MCF 10A (cell line): ENCODE measurements at regions of chr14 and their contacts with region 1.

Region 1: DNA sequence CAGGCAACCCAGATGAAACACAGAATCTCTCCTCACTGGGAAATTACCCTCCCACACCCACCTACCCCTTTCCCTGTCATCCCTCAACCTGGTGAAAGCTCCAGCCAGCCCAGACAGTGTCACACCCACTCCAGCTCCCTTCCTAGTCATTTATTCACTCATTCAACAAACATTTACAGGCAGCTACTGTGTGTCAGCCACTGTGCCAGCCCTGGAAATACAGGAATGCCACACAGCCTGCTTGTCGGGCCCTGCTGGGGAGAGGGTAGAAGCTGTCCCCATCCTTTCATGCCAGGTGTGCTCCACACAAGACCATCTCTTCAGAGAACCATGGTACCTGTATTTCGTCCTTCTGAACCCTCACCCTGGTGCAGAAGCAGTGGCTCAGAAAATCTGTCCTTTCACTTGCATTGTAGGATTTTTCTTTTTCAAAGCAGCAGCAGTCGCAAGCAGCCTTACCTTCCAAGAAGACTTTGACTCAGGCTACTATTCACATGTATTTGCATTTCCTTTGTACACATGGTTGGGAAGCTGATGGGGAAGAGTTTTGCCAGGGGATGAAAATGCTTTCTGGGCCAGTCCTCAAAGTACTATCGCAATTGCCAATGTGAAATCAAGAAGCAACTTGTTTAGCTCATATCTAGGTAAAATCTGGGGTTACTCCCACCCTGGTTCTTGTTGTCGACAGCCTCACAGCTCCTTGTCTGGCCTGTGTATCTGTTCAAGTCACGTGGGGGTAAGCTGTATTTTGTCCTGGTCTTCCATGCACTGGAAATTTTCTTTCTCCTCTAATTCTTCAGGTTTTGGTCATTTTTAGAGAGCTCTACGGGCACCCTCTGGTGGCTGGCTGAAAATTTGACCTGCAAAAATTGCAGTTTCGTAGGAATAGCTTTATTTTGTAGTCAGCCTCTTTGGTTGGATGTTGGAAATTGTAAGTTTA is 147.4 kb upstream of the EGLN3 start:
- DNase-seq: peak; percentile 50
- H3K4me3 Mint-ChIP-seq: no peak overlapping the region
- H3K27ac Mint-ChIP-seq: no peak overlapping the region
- H3K4me1 Mint-ChIP-seq: peaks cover 10% of the 10 kb centered on the region
- H3K27me3 Mint-ChIP-seq: no peaks in the 10 kb centered on the region
- CTCF ChIP-seq: peak; percentile 77

Region 2: DNA sequence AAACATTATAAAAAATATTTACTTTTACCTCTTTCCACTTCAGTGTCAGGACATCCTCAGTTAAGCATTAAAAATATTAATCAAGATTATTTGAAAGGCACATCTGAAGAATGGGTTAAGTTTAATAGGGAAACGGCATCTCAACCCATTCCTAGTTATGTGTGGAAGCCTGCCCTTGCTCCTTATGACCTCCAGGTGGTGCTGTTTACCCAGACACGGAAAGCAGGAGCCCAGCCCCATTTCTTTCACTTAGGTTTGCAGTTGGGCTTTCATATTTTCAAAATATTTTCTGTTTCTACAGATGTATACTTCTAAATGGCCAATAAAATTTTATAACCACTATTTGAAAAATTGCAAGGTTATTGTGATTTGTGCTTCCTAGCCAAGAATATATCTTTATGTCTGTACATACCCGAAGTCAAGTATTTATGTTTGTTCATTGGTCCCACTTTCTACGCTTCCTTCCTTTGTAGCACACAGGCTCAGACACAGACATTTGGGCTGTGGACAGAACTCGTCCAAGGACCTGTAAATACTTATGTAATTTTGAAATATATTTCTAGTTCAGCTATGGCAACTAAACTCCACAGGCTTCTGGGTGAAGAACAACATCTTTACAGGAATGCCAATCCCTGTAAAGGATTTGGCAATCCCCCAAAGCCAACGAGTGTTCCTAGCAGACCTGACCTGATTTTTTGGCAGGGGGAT is 1522.1 kb before region 1 on chr14:
- CTCF ChIA-PET with region 1: no interaction called
- POLR2A ChIA-PET with region 1: no interaction called
- intact Hi-C with region 1: loop called (anchors 1 kb)
- DNase-seq: peak; percentile 73
- H3K4me3 Mint-ChIP-seq: no peak overlapping the region
- H3K27ac Mint-ChIP-seq: no peak overlapping the region
- H3K4me1 Mint-ChIP-seq: no peaks in the 10 kb centered on the region
- H3K27me3 Mint-ChIP-seq: peaks cover 13% of the 10 kb centered on the region
- CTCF ChIP-seq: peak; percentile 97

Region 3: DNA sequence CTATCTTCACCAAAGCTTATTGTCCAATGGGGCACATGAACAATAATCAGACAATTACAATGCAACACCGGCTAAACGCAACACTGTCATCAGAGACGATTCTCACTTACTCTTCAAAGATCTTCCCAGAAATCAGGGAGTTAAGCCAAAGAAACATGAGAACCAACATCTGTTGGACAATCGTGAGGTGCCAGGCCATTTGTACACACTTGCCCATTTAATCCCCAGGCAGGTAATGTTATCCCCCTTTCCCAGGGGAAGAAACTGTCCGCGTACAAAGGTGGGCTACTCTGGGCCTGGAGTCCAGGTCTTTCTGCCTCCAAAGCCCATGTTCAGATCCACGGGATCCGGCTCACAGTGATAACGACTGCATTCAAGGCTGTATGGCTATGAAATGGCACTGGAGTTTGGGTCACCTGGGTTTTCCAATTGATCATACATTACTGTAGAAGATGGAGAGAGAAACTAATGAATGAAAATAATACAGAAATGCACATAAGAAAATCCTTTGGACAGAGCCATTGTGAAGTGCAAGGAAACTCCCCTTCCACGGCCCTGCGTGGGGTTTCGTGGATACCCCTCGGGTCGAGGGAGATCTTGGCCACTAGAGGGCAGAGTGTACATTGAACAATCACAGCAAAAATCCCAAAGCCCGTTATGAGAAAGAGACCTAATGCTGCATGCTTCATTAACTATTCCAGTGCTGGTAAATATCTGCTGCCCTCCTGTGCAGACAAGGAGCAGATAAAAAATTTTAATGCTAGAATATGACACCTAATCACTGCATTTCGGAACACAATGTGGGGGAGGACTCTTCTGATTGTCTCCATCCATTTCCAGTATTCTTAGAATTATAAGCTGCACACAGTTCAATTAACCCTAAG is 258.9 kb before region 1 on chr14:
- CTCF ChIA-PET with region 1: interaction called, 408 read pairs
- POLR2A ChIA-PET with region 1: interaction called, 4 read pairs
- intact Hi-C with region 1: loop called (anchors 1 kb)
- DNase-seq: peak; percentile 56
- H3K4me3 Mint-ChIP-seq: no peak overlapping the region
- H3K27ac Mint-ChIP-seq: no peak overlapping the region
- H3K4me1 Mint-ChIP-seq: peaks cover 11% of the 10 kb centered on the region
- H3K27me3 Mint-ChIP-seq: no peaks in the 10 kb centered on the region
- CTCF ChIP-seq: peak; percentile 76

Region 4: GRCh38 chr14:33950320-33951182 is 147.8 kb before region 1 on chr14 and contains the start of gene EGLN3:
- CTCF ChIA-PET with region 1: interaction called, 11 read pairs
- POLR2A ChIA-PET with region 1: no interaction called
- intact Hi-C with region 1: loop called (anchors 5 kb)
- DNase-seq: peak; percentile 81
- H3K4me3 Mint-ChIP-seq: peak within 1 kb of the TSS; percentile 84
- H3K27ac Mint-ChIP-seq: peak within 1 kb of the TSS; percentile 26
- H3K4me1 Mint-ChIP-seq: no peaks in the 10 kb centered on the region
- H3K27me3 Mint-ChIP-seq: peaks cover 18% of the 10 kb centered on the region
- CTCF ChIP-seq: no peak
- total RNA-seq, gene EGLN3: 0.17 and 0.54 TPM in 2 replicates

Region 5: GRCh38 chr14:34081576-34082136 is 16.7 kb before region 1 on chr14:
- CTCF ChIA-PET with region 1: interaction called, 34 read pairs
- POLR2A ChIA-PET with region 1: interaction called, 3 read pairs
- intact Hi-C with region 1: no loop called
- DNase-seq: peak; percentile 64
- H3K4me3 Mint-ChIP-seq: no peak overlapping the region
- H3K27ac Mint-ChIP-seq: peak overlapping the region; percentile 5
- H3K4me1 Mint-ChIP-seq: peaks cover 15% of the 10 kb centered on the region
- H3K27me3 Mint-ChIP-seq: no peaks in the 10 kb centered on the region
- CTCF ChIP-seq: no peak

Region 6: DNA sequence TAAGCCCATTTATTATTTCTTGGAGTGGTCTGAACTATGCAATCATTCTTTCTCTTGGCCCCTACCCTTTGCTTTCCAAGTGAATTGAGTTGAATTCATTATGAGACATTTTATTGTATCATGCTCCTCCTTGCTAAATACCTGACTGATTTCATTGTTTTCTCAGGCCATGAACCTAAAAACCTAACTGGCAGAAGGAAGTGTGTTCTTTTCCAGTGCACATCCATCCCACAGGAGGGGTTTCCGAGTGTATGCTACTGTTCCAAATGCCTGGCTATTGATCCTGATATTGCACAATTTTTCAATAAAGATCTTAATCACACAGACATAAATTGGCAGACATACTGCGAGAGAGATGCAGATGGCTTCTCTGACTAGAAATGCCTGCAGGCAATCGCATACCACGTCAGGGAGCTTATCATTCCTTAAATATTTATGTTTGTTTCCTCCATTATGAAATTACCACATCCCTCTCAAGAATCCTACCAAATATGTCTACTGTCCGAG is 14.7 kb after region 1 on chr14:
- CTCF ChIA-PET with region 1: interaction called, 13 read pairs
- POLR2A ChIA-PET with region 1: interaction called, 3 read pairs
- intact Hi-C with region 1: no loop called
- DNase-seq: peak; percentile 65
- H3K4me3 Mint-ChIP-seq: peak overlapping the region; percentile 51
- H3K27ac Mint-ChIP-seq: peak overlapping the region; percentile 75
- H3K4me1 Mint-ChIP-seq: peaks cover 37% of the 10 kb centered on the region
- H3K27me3 Mint-ChIP-seq: no peaks in the 10 kb centered on the region
- CTCF ChIP-seq: no peak

Region 7: DNA sequence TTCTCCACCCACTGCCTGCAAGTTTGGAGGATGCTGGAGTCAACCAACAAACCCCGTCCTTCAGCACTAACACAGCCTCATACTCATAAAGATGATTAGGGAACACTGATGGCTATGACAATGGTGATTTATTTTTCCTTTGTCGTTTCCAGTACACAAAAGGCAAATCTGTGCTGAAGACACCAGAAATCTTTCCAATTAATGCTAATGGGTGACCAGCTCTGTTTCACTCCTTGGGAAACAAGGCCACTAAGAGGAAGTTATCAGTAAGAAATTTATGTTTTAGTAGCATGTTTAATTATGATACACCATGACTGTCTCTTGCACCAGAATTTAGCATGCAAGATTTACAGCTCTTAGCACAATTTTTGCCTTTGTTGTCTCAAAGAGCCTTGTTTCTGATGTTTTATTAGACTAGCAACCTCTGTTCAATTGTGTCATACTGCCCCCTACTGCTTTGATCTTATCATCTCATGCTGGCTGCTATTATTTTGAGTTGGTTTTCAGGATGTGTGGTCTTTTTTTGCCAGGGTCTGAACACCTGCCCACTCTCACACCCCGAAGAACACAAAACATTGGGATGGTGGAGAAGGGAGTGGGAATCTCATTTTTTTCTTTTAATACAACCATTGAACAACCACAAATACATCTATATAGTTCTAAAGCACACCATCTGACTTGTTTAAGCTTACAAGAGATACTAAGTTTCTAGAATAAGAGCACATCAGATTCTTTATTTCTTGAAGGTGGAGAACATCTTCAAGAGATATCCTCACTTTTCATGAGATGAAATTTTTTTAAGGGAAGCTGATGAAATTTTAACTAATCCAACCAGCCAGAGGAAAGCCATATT is 202.8 kb after region 1 on chr14:
- CTCF ChIA-PET with region 1: interaction called, 79 read pairs
- POLR2A ChIA-PET with region 1: interaction called, 3 read pairs
- intact Hi-C with region 1: loop called (anchors 1 kb)
- DNase-seq: peak; percentile 73
- H3K4me3 Mint-ChIP-seq: no peak overlapping the region
- H3K27ac Mint-ChIP-seq: peak overlapping the region; percentile 57
- H3K4me1 Mint-ChIP-seq: peaks cover 18% of the 10 kb centered on the region
- H3K27me3 Mint-ChIP-seq: no peaks in the 10 kb centered on the region
- CTCF ChIP-seq: peak; percentile 76